ENCODE measurements at regions of chr16 and their contacts with region 1.

Region 1: GRCh38 chr16:30378236-30379204 is 3.8 kb downstream of the SEPTIN1 start:
- DNase-seq: peak; percentile 100
- H3K4me3 Mint-ChIP-seq: peak overlapping the region; percentile 93
- H3K27ac Mint-ChIP-seq: peak overlapping the region; percentile 99
- H3K4me1 Mint-ChIP-seq: peaks cover 52% of the 10 kb centered on the region
- H3K27me3 Mint-ChIP-seq: no peaks in the 10 kb centered on the region

Region 2: GRCh38 chr16:30335598-30336474 is 42.7 kb before region 1 on chr16:
- CTCF ChIA-PET with region 1: no interaction called
- POLR2A ChIA-PET with region 1: interaction called, 11 read pairs
- DNase-seq: peak; percentile 39
- H3K4me3 Mint-ChIP-seq: peak overlapping the region; percentile 89
- H3K27ac Mint-ChIP-seq: peak overlapping the region; percentile 63
- H3K4me1 Mint-ChIP-seq: peaks cover 20% of the 10 kb centered on the region
- H3K27me3 Mint-ChIP-seq: no peaks in the 10 kb centered on the region

Region 3: DNA sequence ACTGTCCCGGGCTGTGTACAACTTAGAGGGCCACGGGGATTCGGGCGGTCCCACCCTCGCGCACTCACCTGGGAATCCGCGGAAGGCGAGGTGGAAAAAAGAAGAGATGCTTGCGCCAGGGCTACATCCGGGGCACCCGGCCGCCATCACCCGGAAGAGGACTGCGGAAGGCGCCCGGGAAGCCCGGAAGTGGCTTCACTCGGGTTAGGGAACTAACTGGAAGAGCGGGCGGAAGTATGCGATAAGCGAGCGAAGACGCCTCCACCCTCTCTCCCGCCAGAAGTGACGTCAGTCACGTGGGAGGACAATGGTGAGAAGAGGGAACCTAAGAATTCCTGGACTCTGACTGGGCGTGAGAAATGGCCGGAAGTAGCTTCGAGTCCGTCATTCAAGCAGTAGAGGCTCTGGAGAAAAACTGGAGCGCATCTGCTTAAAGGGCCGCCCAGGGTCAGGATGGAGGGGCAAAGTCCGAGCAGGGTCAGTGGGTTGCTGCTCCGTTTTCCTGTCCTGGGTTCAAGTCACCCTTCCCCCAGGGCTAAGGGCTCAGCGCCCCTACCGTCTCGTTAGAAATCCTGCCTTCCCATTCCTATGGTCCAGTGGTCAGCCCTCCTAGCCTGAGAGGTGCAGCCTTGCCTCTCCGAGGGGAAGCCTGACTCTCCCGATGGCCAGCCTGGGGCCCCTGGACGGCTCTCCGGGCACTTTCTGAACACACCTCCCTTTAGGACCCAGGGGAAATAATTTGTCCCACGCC is 23.2 kb before region 1 on chr16 and contains the start of gene CD2BP2:
- CTCF ChIA-PET with region 1: no interaction called
- POLR2A ChIA-PET with region 1: interaction called, 37 read pairs
- DNase-seq: peak; percentile 88
- H3K4me3 Mint-ChIP-seq: peak within 1 kb of the TSS; percentile 90
- H3K27ac Mint-ChIP-seq: peak within 1 kb of the TSS; percentile 93
- H3K4me1 Mint-ChIP-seq: peaks cover 66% of the 10 kb centered on the region
- H3K27me3 Mint-ChIP-seq: no peaks in the 10 kb centered on the region
- total RNA-seq, gene CD2BP2: 75.6 to 75.9 TPM

Region 4: DNA sequence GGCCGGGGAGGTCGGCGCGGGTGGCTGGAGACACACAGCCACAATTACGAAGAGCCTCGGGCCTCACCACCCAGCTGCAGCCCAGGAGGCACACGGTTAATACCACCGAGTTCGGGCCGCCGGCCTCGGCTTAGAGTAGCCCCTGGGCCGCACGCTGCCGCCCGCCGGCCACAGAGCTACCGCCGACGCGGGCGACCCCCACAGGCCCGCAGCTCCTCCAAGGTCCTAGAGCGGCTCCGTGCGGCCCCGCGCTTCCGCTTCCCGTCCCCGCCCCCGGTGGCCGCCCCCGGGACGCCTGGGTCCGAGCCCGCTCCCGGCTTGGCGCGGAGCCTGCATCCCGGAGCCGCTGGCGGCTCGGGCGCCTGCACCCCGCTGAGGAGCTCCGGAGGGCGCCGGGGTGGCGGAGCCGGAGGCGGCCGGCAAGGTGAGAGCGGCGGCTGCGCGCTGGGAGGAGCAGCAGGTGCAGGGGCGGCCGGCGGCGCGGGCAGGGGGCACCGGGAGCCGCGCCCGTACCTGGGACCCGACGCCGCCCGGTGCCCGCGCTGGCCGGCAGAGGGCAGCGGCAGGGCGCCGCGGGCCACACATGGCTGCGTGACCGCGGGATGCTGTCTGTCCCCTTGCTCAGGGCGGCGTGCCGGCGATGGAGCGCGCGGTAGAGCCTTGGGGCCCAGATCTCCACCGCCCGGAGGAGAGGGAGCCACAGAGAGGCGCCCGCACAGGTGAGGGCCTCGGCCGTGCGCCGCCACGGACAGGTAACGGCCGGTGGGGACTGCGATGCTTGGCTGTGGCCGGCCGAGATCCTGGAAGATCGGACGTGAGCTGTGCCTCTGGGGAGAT is 16.9 kb after region 1 on chr16 and contains the start of gene ZNF48:
- CTCF ChIA-PET with region 1: interaction called, 17 read pairs
- POLR2A ChIA-PET with region 1: interaction called, 64 read pairs
- DNase-seq: peak; percentile 59
- H3K4me3 Mint-ChIP-seq: peak within 1 kb of the TSS; percentile 84
- H3K27ac Mint-ChIP-seq: peak within 1 kb of the TSS; percentile 63
- H3K4me1 Mint-ChIP-seq: peaks cover 37% of the 10 kb centered on the region
- H3K27me3 Mint-ChIP-seq: no peaks in the 10 kb centered on the region
- total RNA-seq, gene ZNF48: 14.2 to 14.5 TPM

Region 5: GRCh38 chr16:30407102-30407803 is 28.7 kb after region 1 on chr16 and contains the start of gene ZNF771:
- CTCF ChIA-PET with region 1: interaction called, 50 read pairs
- POLR2A ChIA-PET with region 1: interaction called, 28 read pairs
- DNase-seq: peak; percentile 92
- H3K4me3 Mint-ChIP-seq: peak within 1 kb of the TSS; percentile 89
- H3K27ac Mint-ChIP-seq: peak within 1 kb of the TSS; percentile 79
- H3K4me1 Mint-ChIP-seq: peaks cover 37% of the 10 kb centered on the region
- H3K27me3 Mint-ChIP-seq: peaks cover 3% of the 10 kb centered on the region
- total RNA-seq, gene ZNF771: 4.2 to 4.5 TPM

Region 6: DNA sequence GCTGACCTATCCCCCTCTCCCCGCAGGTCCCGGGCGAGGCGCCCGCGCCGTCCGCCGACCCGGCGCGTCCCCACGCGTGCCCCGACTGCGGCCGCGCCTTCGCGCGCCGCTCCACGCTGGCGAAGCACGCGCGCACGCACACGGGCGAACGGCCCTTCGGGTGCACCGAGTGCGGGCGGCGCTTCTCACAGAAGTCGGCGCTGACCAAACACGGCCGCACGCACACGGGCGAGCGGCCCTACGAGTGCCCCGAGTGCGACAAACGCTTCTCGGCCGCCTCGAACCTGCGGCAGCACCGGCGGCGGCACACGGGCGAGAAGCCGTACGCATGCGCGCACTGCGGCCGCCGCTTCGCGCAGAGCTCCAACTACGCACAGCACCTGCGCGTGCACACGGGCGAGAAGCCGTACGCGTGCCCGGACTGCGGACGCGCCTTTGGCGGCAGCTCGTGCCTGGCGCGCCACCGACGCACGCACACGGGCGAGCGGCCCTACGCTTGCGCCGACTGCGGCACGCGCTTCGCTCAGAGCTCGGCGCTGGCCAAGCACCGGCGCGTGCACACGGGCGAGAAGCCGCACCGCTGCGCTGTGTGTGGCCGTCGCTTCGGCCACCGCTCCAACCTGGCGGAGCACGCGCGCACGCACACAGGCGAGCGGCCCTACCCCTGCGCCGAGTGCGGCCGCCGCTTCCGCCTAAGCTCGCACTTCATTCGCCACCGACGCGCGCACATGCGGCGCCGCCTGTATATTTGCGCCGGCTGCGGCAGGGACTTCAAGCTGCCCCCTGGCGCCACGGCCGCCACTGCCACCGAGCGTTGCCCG is 39.2 kb after region 1 on chr16:
- CTCF ChIA-PET with region 1: no interaction called
- POLR2A ChIA-PET with region 1: interaction called, 17 read pairs
- DNase-seq: peak; percentile 92
- H3K4me3 Mint-ChIP-seq: peak overlapping the region; percentile 60
- H3K27ac Mint-ChIP-seq: peak overlapping the region; percentile 64
- H3K4me1 Mint-ChIP-seq: peaks cover 41% of the 10 kb centered on the region
- H3K27me3 Mint-ChIP-seq: no peaks in the 10 kb centered on the region